ENCODE measurements at regions of chr6 and their contacts with region 1.

Region 1: GRCh38 chr6:31546962-31547726 is at the start of gene NFKBIL1:
- DNase-seq: peak; percentile 91 to 93
- H3K4me3 ChIP-seq: peak within 1 kb of the TSS; percentile 44
- H3K4me3 Mint-ChIP-seq: peak within 1 kb of the TSS; percentile 87
- H3K27ac Mint-ChIP-seq: peak within 1 kb of the TSS; percentile 64
- H3K4me1 ChIP-seq: peaks cover 6% of the 10 kb centered on the region
- H3K4me1 Mint-ChIP-seq: peaks cover 12% of the 10 kb centered on the region
- H3K27me3 ChIP-seq: no peaks in the 10 kb centered on the region
- H3K27me3 Mint-ChIP-seq: no peaks in the 10 kb centered on the region
- CTCF ChIP-seq: no peak
- total RNA-seq, gene NFKBIL1: 14.7 and 17.4 TPM in 2 replicates

Region 2: DNA sequence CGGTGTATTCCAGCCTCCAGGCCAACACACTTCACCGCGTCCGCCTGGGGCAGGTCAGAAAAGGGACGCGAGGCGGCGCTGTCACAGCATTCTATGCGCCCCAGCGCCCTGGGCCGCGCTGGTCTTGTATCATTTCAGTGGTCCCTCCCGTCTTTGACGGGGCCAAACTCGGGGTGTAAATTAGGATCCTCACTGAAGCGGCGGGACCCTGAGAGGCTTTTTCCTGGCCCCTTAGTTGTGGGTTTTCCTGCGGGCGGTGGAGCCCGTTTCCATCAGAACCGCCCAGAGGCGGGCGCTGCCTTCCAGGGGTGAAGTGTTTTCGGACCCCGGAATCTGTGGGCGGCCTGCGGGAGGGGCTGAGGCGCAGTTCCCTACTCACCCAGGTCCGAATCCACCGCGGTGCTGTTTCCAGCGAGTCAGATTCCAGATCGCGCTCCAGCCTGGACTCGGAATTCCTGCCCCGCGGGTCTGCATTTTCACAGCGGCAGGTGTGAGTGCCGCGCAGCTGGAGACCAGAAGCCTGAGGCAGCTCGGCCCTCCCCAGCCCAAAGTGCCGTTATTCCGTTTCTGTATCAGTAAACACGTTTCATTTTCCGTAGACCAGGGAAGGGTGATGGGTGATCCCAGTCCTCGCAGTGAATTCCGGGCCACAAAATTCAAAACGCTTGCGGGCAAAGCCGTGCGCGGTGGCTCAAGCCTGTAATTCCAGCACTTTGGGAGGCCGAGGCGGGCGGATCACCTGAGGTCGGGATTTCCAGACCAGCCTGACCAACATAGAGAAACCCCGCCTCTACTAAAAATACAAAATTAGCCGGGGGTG is 53.1 kb before region 1 on chr6:
- CTCF ChIA-PET with region 1: no interaction called
- POLR2A ChIA-PET with region 1: no interaction called
- intact Hi-C with region 1: loop called (anchors 1 kb)
- DNase-seq: peak; percentile 77 to 82
- H3K4me3 ChIP-seq: peak overlapping the region; percentile 55
- H3K4me3 Mint-ChIP-seq: peak overlapping the region; percentile 41
- H3K27ac Mint-ChIP-seq: no peak overlapping the region
- H3K4me1 ChIP-seq: no peaks in the 10 kb centered on the region
- H3K4me1 Mint-ChIP-seq: peaks cover 23% of the 10 kb centered on the region
- H3K27me3 ChIP-seq: no peaks in the 10 kb centered on the region
- H3K27me3 Mint-ChIP-seq: peaks cover 19% of the 10 kb centered on the region
- CTCF ChIP-seq: peak; percentile 83 to 89

Region 3: GRCh38 chr6:31580807-31581433 is 33.8 kb after region 1 on chr6:
- CTCF ChIA-PET with region 1: interaction called, 5 read pairs
- POLR2A ChIA-PET with region 1: interaction called, 6 read pairs
- intact Hi-C with region 1: loop called (anchors 2 kb)
- DNase-seq: peak; percentile 82 to 92
- H3K4me3 ChIP-seq: peak overlapping the region; percentile 80
- H3K4me3 Mint-ChIP-seq: peak overlapping the region; percentile 97
- H3K27ac Mint-ChIP-seq: peak overlapping the region; percentile 83
- H3K4me1 ChIP-seq: peaks cover 3% of the 10 kb centered on the region; the same call in 1 of the 2 replicates
- H3K4me1 Mint-ChIP-seq: peaks cover 18% of the 10 kb centered on the region
- H3K27me3 ChIP-seq: no peaks in the 10 kb centered on the region
- H3K27me3 Mint-ChIP-seq: no peaks in the 10 kb centered on the region
- CTCF ChIP-seq: peak; percentile 90 to 93

Region 4: GRCh38 chr6:31619805-31620585 is 72.9 kb after region 1 on chr6:
- CTCF ChIA-PET with region 1: no interaction called
- POLR2A ChIA-PET with region 1: no interaction called
- intact Hi-C with region 1: loop called (anchors 1 kb)
- DNase-seq: peak; percentile 97 to 98
- H3K4me3 ChIP-seq: peak overlapping the region; percentile 66
- H3K4me3 Mint-ChIP-seq: peak overlapping the region; percentile 83
- H3K27ac Mint-ChIP-seq: peak overlapping the region; percentile 92
- H3K4me1 ChIP-seq: peaks cover 20% of the 10 kb centered on the region
- H3K4me1 Mint-ChIP-seq: peaks cover 19% of the 10 kb centered on the region
- H3K27me3 ChIP-seq: no peaks in the 10 kb centered on the region
- H3K27me3 Mint-ChIP-seq: no peaks in the 10 kb centered on the region
- CTCF ChIP-seq: no peak

Region 5: DNA sequence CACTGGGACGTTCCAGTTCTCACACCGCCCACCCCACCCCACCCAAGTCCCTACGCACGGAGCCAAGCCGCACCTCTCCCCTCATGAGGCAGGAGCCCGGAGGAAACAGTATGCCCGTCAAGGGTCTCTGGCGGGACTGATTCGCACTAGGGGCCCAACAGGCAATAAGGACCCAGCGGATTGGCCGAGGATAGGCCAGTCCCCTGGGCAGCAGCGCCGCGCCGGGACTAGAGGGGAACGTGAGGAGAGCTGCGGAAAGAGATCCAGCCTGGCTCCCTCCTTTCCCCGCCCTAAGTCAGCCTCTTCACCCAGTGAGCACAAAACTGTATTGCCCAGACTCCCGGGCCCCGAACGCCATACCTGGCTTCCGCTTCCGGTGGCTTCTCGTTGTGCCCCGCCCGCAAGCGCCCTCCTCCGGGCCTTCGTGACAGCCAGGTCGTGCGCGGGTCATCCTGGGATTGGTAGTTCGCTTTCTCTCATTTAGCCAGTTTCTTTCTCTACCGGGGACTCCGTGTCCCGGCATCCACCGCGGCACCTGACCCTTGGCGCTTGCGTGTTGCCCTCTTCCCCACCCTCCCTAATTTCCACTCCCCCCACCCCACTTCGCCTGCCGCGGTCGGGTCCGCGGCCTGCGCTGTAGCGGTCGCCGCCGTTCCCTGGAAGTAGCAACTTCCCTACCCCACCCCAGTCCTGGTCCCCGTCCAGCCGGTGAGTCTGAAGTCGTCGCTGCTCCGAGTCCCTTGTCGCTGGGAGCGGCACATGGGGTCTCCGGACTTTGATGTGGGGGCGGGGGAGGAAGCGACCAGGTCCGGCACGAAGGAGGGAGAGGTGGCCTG is 118.6 kb after region 1 on chr6 and contains the start of gene CSNK2B:
- CTCF ChIA-PET with region 1: no interaction called
- POLR2A ChIA-PET with region 1: interaction called, 4 read pairs
- intact Hi-C with region 1: loop called (anchors 5 kb)
- DNase-seq: peak; percentile 97 to 98
- H3K4me3 ChIP-seq: peak within 1 kb of the TSS; percentile 90
- H3K4me3 Mint-ChIP-seq: peak within 1 kb of the TSS; percentile 86
- H3K27ac Mint-ChIP-seq: peak within 1 kb of the TSS; percentile 96
- H3K4me1 ChIP-seq: peaks cover 17% of the 10 kb centered on the region
- H3K4me1 Mint-ChIP-seq: peaks cover 25% of the 10 kb centered on the region
- H3K27me3 ChIP-seq: no peaks in the 10 kb centered on the region
- H3K27me3 Mint-ChIP-seq: no peaks in the 10 kb centered on the region
- CTCF ChIP-seq: no peak
- total RNA-seq, gene CSNK2B: 219 and 221 TPM in 2 replicates

Measured in Caco-2 (cell line).